AG04450 (cell line): ENCODE measurements at regions of chr6 and their contacts with region 1.

Region 1: GRCh38 chr6:33248925-33249731 is 22.5 kb downstream of the VPS52 start:
- DNase-seq: peak; percentile 98
- H3K4me3 ChIP-seq: peak overlapping the region; percentile 80
- H3K27ac ChIP-seq: peak overlapping the region; percentile 97
- H3K27me3 ChIP-seq: no peaks in the 10 kb centered on the region
- CTCF ChIP-seq: peak; percentile 26; the same call in 1 of the 2 replicates

Region 2: GRCh38 chr6:32885698-32886286 is 363.3 kb before region 1 on chr6:
- CTCF ChIA-PET with region 1: interaction called, 10 read pairs
- POLR2A ChIA-PET with region 1: interaction called, 3 read pairs
- DNase-seq: no peak
- H3K4me3 ChIP-seq: no peak overlapping the region
- H3K27ac ChIP-seq: no peak overlapping the region
- H3K27me3 ChIP-seq: peaks cover 2% of the 10 kb centered on the region
- CTCF ChIP-seq: peak; percentile 63

Region 3: GRCh38 chr6:33014841-33015634 is 234.1 kb before region 1 on chr6:
- CTCF ChIA-PET with region 1: interaction called, 72 read pairs
- POLR2A ChIA-PET with region 1: no interaction called
- DNase-seq: peak; percentile 73
- H3K4me3 ChIP-seq: no peak overlapping the region
- H3K27ac ChIP-seq: no peak overlapping the region
- H3K27me3 ChIP-seq: peaks cover 42% of the 10 kb centered on the region
- CTCF ChIP-seq: peak; percentile 69

Region 4: GRCh38 chr6:33147807-33148666 is 101.1 kb before region 1 on chr6:
- CTCF ChIA-PET with region 1: interaction called, 13 read pairs
- POLR2A ChIA-PET with region 1: no interaction called
- DNase-seq: peak; percentile 32
- H3K4me3 ChIP-seq: no peak overlapping the region
- H3K27ac ChIP-seq: no peak overlapping the region
- H3K27me3 ChIP-seq: peaks cover 16% of the 10 kb centered on the region
- CTCF ChIP-seq: peak; percentile 92

Region 5: DNA sequence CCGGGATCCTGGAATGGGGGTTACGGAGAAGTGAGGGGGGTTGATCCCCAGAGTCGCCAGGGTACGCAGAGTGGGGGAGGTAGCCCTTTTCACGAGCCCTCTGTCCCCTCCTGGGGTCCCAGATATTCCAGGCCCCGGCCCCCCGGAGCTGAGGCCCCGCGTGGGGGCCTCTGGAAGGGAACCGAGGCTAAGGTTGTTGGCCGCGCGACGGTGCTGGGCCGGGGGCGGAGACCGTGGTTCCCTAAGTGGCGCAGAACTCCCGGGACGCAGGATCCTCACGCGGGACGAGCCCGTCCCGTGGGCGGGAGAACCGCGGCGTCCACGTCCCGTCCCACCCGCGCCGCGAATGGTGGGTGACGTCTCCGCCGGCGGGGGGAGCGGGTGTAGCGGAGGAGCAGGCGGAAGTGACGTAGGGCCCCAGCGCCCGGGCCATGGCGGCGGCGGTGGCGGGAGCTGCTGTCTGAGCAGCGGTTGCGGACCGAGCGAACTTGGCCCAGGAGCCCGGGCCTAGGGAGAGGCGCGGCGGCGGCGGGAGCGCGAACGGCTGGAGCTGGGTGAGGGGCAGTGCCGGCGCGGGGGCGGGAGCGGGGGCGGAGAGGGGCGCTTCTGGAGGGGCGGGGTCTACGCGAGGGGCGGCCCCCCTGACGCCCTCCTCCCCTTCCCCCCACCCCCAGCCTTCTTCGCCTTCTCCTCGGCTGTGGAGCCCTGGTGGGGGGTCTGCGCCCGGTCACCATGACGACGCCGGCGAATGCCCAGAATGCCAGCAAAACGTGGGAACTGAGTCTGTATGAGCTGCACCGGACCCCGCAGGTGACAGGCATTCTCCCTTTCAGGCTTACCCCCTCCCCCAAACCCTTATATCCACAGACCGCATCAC is 40.8 kb before region 1 on chr6 and contains the start of gene RING1:
- CTCF ChIA-PET with region 1: interaction called, 22 read pairs
- POLR2A ChIA-PET with region 1: interaction called, 10 read pairs
- DNase-seq: no peak
- H3K4me3 ChIP-seq: peak within 1 kb of the TSS; percentile 78
- H3K27ac ChIP-seq: peak within 1 kb of the TSS; percentile 91
- H3K27me3 ChIP-seq: no peaks in the 10 kb centered on the region
- CTCF ChIP-seq: no peak
- polyA plus RNA-seq, gene RING1: 23.8 and 26.8 TPM in 2 replicates

Region 6: DNA sequence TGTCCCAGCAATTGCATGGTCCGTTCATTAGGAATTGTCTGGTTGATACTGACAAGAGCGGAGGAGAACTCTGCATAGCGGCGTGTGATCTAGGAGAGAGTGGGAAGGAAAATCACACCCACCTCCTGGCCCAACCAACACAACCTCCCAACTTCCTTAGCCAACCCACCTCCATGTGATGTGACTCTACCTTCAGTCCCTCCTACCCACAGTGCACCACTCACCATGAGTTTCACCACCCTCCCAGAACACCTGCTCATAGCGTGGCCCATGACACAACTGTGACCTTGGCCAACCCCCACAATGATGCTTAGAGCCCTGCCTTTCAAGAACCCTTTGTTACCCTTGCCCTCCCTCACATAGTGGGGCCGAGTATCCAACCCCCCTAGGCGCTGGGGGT is 14.9 kb after region 1 on chr6:
- CTCF ChIA-PET with region 1: interaction called, 10 read pairs
- POLR2A ChIA-PET with region 1: interaction called, 52 read pairs
- DNase-seq: no peak
- H3K4me3 ChIP-seq: no peak overlapping the region
- H3K27ac ChIP-seq: no peak overlapping the region
- H3K27me3 ChIP-seq: no peaks in the 10 kb centered on the region
- CTCF ChIP-seq: no peak

Region 7: DNA sequence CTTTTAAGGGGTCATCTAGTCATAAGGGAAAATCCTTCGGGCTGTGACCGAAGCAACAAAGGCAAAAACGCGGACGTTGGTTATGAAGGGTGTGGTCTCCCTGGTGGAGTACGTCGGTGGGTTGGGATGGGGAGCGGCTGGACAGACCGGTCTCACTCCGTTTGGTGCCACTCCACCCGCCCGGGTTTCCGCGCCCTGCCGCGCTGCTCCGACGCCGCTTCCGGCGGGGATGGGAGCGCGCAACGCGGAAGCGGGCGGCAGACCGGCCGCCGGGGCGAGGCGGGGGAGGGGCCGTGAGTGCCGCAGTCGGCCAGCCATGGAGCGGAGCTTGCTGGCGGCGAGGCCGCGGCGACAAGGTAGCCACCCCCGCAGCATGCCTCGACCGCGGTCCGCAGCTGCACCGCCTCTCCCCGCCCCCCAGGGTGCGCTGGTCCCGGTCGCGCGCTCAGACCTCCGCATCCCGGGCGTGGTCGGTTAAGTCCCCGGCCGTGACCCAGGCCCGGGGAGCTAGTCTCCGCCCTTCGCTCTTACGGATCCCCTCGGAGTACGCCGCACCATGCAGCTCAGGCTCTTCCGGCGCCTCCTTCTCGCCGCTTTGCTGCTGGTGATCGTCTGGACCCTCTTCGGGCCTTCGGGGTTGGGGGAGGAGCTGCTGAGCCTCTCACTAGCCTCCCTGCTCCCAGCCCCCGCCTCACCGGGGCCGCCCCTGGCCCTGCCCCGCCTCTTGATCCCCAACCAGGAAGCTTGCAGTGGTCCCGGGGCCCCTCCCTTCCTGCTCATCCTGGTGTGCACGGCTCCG is 27.9 kb after region 1 on chr6 and contains the start of gene B3GALT4:
- CTCF ChIA-PET with region 1: no interaction called
- POLR2A ChIA-PET with region 1: interaction called, 52 read pairs
- DNase-seq: no peak
- H3K4me3 ChIP-seq: peak within 1 kb of the TSS; percentile 50
- H3K27ac ChIP-seq: peak within 1 kb of the TSS; percentile 68
- H3K27me3 ChIP-seq: no peaks in the 10 kb centered on the region
- CTCF ChIP-seq: peak; percentile 45
- polyA plus RNA-seq, gene B3GALT4: 1.1 and 1.4 TPM in 2 replicates

Region 8: DNA sequence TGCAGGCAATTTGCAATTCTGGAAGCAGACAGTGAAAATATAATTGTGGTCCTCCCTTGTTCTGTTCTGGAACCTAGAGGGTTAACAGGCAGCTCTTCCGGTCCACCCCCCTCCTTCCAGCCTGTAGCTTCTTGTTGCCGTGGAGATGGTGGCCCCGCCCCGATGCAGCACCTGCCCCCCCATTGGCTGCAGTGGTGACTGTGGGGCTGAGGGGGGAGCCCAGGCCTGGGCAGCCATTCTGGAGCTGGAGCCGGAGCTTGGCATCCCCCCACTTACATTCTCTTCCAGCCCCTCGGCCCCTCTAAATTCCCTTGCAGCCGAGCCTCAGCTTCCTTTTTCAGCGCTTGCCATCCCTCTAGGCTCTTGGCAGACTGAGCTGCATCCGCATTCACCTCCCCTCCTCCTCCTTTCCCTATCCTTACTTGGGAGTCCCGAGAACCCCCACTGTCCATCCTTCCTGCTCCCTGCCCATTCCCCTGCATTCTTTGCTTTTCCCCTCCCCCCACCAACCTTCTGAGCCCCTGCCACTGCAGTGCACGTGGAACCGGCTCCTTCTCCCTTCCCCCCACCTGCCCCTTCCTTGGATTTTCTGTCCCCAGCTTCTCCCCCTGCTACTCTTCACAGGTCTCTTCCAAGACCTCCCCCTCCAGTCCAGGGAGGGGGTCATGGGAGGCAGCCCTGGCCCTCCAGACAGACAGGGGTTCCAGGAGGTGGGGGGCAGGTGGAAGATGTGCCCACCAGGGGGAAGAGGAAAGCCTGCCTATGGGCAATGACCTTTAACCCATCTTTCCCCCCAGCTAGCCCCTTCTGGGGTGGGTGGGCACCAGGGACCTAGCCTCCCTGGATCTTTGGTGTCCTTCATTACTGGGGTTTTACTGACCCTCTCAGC is 182.1 kb after region 1 on chr6:
- CTCF ChIA-PET with region 1: no interaction called
- POLR2A ChIA-PET with region 1: no interaction called
- DNase-seq: no peak
- H3K4me3 ChIP-seq: peak overlapping the region; percentile 25; the same call in 1 of the 2 replicates
- H3K27ac ChIP-seq: no peak overlapping the region
- H3K27me3 ChIP-seq: no peaks in the 10 kb centered on the region
- CTCF ChIP-seq: no peak

Region 9: GRCh38 chr6:33672808-33673207 is 423.7 kb after region 1 on chr6:
- CTCF ChIA-PET with region 1: no interaction called
- POLR2A ChIA-PET with region 1: no interaction called
- DNase-seq: peak; percentile 78
- H3K4me3 ChIP-seq: no peak overlapping the region
- H3K27ac ChIP-seq: no peak overlapping the region
- H3K27me3 ChIP-seq: no peaks in the 10 kb centered on the region
- CTCF ChIP-seq: peak; percentile 70